Head of caudate nucleus (tissue), 42 donors: ENCODE measurements at regions of chr6 and their contacts with region 1.

Region 1: GRCh38 chr6:123965894-123966293 is 162.2 kb downstream of the NKAIN2 start:
- DNase-seq: peak in 25 of 42 donors; percentile 5 to 71 (median 32)

Region 2: GRCh38 chr6:123802697-123803496 is 163.0 kb before region 1 on chr6:
- intact Hi-C with region 1: loop called (anchors 5 kb)
- DNase-seq: peak; percentile 85 to 96 (median 92)

Region 3: GRCh38 chr6:123925358-123925757 is 40.5 kb before region 1 on chr6:
- intact Hi-C with region 1: no loop called
- DNase-seq: no peak

Region 4: GRCh38 chr6:124260337-124260736 is 294.4 kb after region 1 on chr6:
- intact Hi-C with region 1: no loop called
- DNase-seq: no peak